ENCODE measurements at regions of chrX and their contacts with region 1.

Region 1: GRCh38 chrX:46408553-46409407 is 136.4 kb downstream of the ZNF674 start:
- DNase-seq: peak; percentile 46 to 64
- H3K4me3 ChIP-seq: no peak overlapping the region
- H3K4me3 Mint-ChIP-seq: no peak overlapping the region
- H3K27ac Mint-ChIP-seq: no peak overlapping the region
- H3K4me1 ChIP-seq: peaks cover 4% of the 10 kb centered on the region; the same call in 1 of the 2 replicates
- H3K4me1 Mint-ChIP-seq: no peaks in the 10 kb centered on the region
- H3K27me3 ChIP-seq: no peaks in the 10 kb centered on the region
- H3K27me3 Mint-ChIP-seq: no peaks in the 10 kb centered on the region
- CTCF ChIP-seq: peak; percentile 58 to 74

Region 2: DNA sequence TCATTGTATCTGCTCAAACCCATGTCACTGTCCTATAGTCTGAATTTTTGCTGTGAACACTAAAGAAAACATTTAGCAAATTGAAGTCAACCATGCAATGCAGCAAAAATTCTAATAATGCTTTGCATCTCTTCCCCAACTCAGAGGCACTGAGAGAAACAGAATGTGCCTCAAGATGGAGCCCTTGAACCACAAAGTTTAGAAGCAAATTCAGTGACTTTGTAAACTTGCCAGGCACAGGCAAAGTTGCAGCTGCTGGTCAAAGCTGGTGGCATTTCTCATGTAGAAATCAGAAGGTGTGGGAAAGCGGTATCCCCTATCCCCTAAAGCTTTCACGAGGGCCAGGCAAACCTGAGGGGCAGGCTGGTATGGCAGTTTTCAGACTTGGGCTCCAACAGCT is 1086.4 kb before region 1 on chrX:
- CTCF ChIA-PET with region 1: no interaction called
- POLR2A ChIA-PET with region 1: no interaction called
- intact Hi-C with region 1: loop called (anchors 10 kb)
- DNase-seq: peak; percentile 31 to 35
- H3K4me3 ChIP-seq: no peak overlapping the region
- H3K4me3 Mint-ChIP-seq: no peak overlapping the region
- H3K27ac Mint-ChIP-seq: no peak overlapping the region
- H3K4me1 ChIP-seq: no peaks in the 10 kb centered on the region
- H3K4me1 Mint-ChIP-seq: no peaks in the 10 kb centered on the region
- H3K27me3 ChIP-seq: no peaks in the 10 kb centered on the region
- H3K27me3 Mint-ChIP-seq: peaks cover 3% of the 10 kb centered on the region
- CTCF ChIP-seq: peak in 1 of 2 experiments; percentile 39

Region 3: GRCh38 chrX:46381630-46382029 is 27.1 kb before region 1 on chrX:
- CTCF ChIA-PET with region 1: interaction called, 9 read pairs
- POLR2A ChIA-PET with region 1: no interaction called
- intact Hi-C with region 1: loop called (anchors 1 kb)
- DNase-seq: peak; percentile 23 to 40
- H3K4me3 ChIP-seq: no peak overlapping the region
- H3K4me3 Mint-ChIP-seq: no peak overlapping the region
- H3K27ac Mint-ChIP-seq: no peak overlapping the region
- H3K4me1 ChIP-seq: 0 out of 2 replicates have a peak, but pooled peaks cover 1% of the 10 kb centered on the region
- H3K4me1 Mint-ChIP-seq: peaks cover 8% of the 10 kb centered on the region
- H3K27me3 ChIP-seq: no peaks in the 10 kb centered on the region
- H3K27me3 Mint-ChIP-seq: no peaks in the 10 kb centered on the region
- CTCF ChIP-seq: peak in 1 of 2 experiments; percentile 35

Measured in Caco-2 (cell line).